GM12878 (cell line): ENCODE measurements at regions of chr1 and their contacts with region 1.

Region 1: DNA sequence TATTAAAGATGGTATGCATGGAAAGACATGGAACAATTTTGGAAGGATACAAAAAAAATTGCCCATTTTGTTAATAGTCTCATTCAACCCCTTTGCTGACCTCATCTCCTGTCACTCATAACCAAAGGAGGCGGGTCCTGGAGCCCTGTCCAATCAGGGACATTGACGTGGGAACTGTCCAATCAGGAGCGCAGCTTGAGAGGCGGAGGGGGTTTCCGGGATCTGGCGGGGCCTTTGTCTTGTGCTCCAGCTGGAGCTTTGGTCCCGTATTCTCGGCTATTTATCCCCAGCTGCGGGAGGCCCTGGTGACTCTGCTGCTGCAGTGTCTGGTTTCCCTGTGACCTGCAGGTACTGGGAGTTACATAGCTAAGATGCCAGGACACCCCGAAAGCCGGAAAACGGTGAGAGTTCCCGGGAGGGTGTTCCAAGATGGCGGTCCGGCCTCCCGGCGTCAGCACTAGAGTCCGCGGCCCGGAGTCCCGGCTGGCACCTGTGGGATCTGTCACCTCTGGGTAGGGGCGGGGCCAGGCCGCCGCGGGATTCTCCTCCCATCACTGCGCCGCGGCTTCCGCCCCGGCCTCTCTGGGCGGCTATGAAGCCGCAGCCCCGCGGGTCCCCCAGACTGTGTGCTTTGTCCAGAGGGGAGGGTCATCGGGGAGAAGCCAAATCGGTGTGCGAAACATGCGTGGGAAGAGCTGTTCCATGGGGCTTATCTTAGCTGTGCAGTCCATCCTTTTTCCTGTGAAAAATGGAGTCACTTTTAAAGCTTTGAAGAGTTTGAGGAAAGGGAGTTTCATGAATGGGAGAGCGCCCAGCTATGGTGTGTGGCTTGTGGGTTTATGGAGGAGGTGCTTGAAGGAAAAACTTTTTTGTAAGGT is at the start of gene ZNF678:
- DNase-seq: peak; percentile 80
- ATAC-seq: peak; percentile 98
- H3K4me3 ChIP-seq: peak within 1 kb of the TSS; percentile 84
- H3K27ac ChIP-seq: peak within 1 kb of the TSS; percentile 80
- H3K4me1 ChIP-seq: no peaks in the 10 kb centered on the region
- H3K27me3 ChIP-seq: no peaks in the 10 kb centered on the region
- CTCF ChIP-seq: no peak
- EP300 ChIP-seq: no peak; a peak in 1 of 4 replicates
- POLR2A ChIP-seq: peak; percentile 79
- RAD21 ChIP-seq: no peak
- polyA plus RNA-seq, gene ZNF678: 1.4 to 1.9 TPM

Region 2: DNA sequence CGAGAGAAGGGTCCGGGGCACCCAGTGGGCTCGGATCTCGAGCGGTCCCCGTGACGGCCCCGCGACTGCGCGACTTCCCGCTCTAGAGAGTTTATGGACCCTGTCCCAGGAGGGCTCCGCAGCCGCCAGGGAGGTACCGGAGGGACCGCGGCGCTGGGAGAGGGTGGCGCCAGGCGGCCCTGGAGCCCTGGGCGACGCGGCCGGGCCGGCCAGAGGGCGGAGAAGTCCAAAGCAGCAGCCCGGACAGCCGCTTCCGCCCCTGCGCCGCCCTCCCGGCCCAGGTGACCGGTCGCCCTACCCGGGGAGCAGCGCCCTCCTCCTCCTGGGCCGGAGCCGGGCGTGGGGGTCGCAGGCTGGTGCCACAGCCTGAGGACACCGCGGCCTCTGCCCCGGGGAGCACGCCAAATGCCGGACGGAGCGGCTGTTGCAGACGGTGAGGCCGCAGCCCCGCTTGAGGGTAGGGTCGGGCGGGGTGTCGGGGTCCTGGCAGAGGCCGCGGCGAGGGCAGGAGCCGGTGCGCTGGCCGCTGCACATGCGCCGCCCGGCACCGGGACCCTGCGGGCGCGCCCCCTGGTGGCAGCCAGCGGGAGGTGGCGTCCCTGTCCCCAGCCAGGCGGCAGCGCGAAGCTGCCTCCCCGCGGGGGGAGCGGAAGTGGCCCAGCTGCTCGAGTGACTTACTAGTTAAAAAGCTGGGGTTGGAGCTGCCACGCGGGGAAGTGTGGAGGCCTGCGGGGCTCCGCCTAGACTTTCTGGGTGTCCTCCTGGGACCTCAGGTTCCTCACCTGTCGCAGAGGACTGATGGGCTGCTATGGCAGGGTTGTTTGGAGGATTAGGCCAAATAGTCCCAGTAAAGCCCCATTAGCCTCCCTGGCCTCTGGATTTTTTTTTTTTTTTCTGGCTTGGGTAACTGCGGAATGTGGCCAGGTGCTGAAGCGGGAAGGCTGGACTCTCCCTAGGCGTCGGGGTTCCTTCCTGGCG is 21.1 kb before region 1 on chr1:
- CTCF ChIA-PET with region 1: interaction called, 12 read pairs
- POLR2A ChIA-PET with region 1: interaction called, 3 read pairs
- RAD21 ChIA-PET with region 1: interaction called, 5 read pairs
- SMC1A ChIA-PET with region 1: interaction called, 6 read pairs
- in situ Hi-C with region 1: no loop called
- intact Hi-C with region 1: loop called (anchors 1 kb)
- DNase-seq: peak; percentile 26
- ATAC-seq: peak; percentile 97
- H3K4me3 ChIP-seq: peak overlapping the region; percentile 58; the same call in 1 of the 2 replicates
- H3K27ac ChIP-seq: peak overlapping the region; percentile 33; the same call in 1 of the 2 replicates
- H3K4me1 ChIP-seq: peaks cover 3% of the 10 kb centered on the region; the same call in 1 of the 2 replicates
- H3K27me3 ChIP-seq: no peaks in the 10 kb centered on the region
- CTCF ChIP-seq: peak; percentile 89 to 94 (median 90)
- EP300 ChIP-seq: no peak
- POLR2A ChIP-seq: no peak
- RAD21 ChIP-seq: peak; percentile 48

Region 3: DNA sequence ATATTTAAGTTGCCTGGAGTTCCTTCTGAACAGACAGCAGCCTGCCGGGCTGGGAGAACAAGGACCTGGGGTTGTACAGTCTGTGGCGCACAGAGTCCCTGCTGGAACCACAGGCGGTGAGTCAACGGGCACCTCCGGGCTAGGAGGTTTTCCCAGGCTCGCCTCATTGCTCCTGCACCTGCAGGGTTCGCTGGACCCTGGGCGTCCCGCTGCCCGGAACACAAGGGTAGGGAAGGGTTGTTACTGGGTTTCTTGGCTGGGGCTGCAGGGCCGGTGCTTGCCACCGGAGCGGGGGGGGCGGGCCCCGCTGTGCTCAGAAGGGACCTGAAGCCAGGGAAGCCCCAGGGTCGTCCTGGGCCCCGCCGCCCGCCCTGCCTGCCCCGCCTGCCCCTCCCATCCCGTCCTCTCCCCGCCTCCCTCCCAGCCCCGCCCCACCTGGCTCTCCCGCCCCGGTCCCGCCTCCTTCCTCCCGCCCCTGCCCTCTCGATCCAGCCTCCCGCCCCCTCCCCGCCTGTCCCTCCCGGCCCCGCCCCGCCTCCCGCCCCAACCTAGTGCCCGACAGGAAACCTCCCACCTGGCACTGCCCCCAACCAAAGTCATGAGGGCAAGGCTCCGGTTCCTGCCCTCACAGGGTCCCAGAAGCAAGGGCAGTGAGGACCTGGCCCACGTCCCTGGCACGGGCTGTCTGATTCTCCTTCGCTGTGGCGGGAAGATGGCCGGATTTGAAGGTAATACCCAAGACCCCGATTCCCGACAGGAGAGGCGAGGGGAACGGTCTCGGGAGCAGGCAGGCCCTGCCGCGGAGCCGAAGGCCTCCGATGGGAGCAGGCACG is 164.7 kb after region 1 on chr1:
- CTCF ChIA-PET with region 1: interaction called, 3 read pairs
- POLR2A ChIA-PET with region 1: no interaction called
- RAD21 ChIA-PET with region 1: no interaction called
- SMC1A ChIA-PET with region 1: no interaction called
- in situ Hi-C with region 1: no loop called
- intact Hi-C with region 1: loop called (anchors 5 kb)
- DNase-seq: peak; percentile 24
- ATAC-seq: peak; percentile 79
- H3K4me3 ChIP-seq: peak overlapping the region; percentile 68
- H3K27ac ChIP-seq: peak overlapping the region; percentile 33; the same call in 1 of the 2 replicates
- H3K4me1 ChIP-seq: peaks cover 14% of the 10 kb centered on the region
- H3K27me3 ChIP-seq: no peaks in the 10 kb centered on the region
- CTCF ChIP-seq: no peak
- EP300 ChIP-seq: no peak
- POLR2A ChIP-seq: peak; percentile 59
- RAD21 ChIP-seq: no peak

Region 4: DNA sequence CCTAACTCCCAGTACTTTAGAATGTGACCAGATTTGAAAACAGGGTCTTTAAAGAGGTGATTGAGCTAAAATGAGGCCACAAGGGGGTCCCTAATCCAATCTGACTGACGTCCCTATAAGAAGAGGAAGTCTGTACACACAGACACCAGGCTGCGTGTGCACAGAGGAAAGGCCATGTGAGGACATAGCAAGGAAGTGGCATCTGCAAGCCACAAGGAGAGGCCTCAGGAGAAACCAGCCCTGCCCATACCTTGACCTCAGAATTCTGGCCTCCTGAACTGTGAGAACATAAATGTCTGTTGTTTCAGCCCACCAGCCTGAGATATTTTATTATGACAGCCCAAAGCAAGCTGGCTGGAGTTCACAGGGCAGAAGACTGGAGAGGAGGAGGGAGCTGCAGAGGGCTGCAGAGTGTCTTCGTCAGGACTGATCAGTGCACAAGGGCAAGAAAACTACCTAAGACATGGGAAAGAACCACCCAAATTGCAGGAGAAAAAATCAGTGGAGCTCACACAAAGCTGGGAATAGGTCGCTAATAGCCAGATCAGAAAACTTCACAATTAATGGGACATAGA is 398.2 kb after region 1 on chr1:
- CTCF ChIA-PET with region 1: no interaction called
- POLR2A ChIA-PET with region 1: no interaction called
- RAD21 ChIA-PET with region 1: no interaction called
- SMC1A ChIA-PET with region 1: no interaction called
- in situ Hi-C with region 1: no loop called
- intact Hi-C with region 1: no loop called
- DNase-seq: no peak
- ATAC-seq: no peak
- H3K4me3 ChIP-seq: no peak overlapping the region
- H3K27ac ChIP-seq: no peak overlapping the region
- H3K4me1 ChIP-seq: no peaks in the 10 kb centered on the region
- H3K27me3 ChIP-seq: no peaks in the 10 kb centered on the region; a peak in 1 of 4 replicates
- CTCF ChIP-seq: no peak
- EP300 ChIP-seq: no peak
- POLR2A ChIP-seq: no peak
- RAD21 ChIP-seq: no peak